Posterior cingulate gyrus (tissue), 11 donors: ENCODE measurements at regions of chr4 and their contacts with region 1.

Region 1: DNA sequence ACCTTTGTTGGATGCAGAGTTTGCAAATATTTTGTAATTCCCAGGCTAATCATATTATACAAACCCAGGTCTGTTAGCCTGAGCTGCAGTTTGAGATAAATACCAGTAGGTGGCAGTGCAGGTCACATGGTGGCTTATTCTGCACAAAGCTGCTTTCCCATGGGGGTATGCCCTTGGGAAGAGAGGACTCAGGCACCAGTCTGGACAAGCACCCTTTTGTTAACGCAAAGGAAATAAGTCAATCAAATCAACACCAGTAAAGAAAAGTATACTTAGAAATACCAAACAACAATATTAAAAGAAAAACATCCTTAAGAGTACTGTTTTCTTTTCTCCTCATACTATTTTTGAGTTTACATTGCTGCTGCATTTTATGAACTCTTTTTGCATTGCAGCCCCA is 389.0 kb upstream of the ZFP42 start:
- DNase-seq: peak in 4 of 10 donors; percentile 29 to 77 (median 38)

Region 2: GRCh38 chr4:189128341-189128740 is 1521.8 kb after region 1 on chr4:
- intact Hi-C with region 1: loop called (anchors 5 kb)
- DNase-seq: no peak

Region 3: GRCh38 chr4:189202182-189202868 is 1595.7 kb after region 1 on chr4:
- intact Hi-C with region 1: loop called (anchors 5 kb)
- DNase-seq: peak in 8 of 10 donors; percentile 11 to 85 (median 42)